Sigmoid colon (tissue), 7 donors: ENCODE measurements at regions of chr19 and their contacts with region 1.

Region 1: DNA sequence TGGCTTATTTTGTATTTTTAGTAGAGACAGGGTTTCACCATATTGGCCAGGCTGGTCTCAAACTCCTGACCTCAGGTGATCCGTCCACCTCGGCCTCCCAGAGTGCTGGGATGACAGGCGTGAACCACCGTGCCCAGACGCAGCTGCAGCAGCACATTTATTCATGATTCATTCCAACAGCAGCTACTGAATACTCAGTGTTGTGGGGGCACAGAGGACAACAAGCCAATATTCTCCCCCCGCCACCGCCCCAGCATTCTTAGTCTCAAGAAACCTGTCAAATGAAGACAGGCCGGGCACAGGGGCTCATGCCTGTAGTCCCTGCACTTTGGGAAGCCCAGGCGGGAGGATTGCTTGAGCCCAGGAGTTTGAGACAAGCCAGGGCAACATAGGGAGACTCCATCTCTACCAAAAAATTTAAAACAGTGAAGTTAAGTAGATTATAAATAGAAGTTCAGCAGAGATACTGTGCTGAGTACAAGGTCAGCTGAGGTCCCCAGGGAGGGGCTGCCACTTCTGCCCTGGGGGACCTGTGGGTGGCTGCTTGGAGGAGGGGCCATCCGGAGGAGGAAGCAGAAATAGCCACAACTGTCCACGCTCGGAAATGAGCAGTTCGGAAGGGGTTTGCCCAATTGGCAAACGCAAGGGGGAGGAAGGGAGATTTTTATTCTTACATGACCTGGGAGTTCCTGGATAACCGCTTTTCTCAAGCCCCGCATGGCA is 4.3 kb downstream of the DOT1L start:
- DNase-seq: peak; percentile 78
- H3K4me3 ChIP-seq: peak overlapping the region in 2 of 4 donors; percentile 7 to 17
- H3K27ac ChIP-seq: peak overlapping the region; percentile 91 to 100 (median 97)
- H3K4me1 ChIP-seq: peaks cover 0 to 87% (median 80%) of the 10 kb centered on the region in 4 donors
- H3K27me3 ChIP-seq: no peaks in the 10 kb centered on the region
- CTCF ChIP-seq: no peak
- EP300 ChIP-seq: peak in 1 of 4 donors; percentile 57
- POLR2A ChIP-seq: no peak

Region 2: DNA sequence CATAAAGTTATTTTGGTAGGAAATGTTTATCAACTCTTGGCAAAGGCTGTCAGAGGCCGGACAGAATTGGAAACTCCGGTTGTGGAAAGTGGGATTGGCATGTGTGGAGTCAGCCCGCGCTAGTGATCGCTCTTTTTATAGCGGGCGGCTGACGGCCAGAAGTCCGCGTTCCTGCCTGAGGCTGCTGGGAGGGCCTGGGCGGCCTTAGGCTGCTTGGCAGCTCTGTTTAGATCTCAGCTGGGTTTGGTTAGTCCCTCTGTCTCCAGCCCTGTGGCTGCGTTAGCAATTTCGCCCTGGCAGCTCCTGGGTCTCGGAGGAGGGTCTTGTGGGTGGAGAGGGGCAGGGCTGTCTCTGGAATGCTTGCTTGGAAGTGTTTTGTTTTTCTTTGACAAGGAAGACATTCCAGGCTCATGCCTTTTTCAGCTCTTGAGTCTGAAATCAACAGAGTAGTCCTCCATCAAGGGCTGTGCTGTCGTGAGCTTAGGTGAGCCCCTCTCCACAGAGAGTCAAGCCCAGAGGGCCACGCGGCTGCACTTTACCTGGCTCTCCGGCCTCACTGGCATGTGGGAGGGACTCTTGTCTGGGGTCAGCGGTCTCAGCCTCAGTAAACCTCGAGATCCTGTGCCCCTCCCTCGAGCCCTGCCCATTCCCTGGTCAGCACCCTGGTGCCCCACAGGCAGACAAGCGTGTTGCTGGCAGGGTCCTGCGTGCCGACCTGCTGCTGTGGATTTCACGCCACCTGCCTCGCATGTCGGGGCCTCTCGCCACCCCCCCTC is 18.2 kb after region 1 on chr19:
- intact Hi-C with region 1: loop called (anchors 1 kb)
- DNase-seq: peak; percentile 96
- H3K4me3 ChIP-seq: peak overlapping the region in 3 of 4 donors; percentile 0 to 21 (median 12)
- H3K27ac ChIP-seq: peak overlapping the region; percentile 80 to 92 (median 84)
- H3K4me1 ChIP-seq: peaks cover 3 to 77% (median 67%) of the 10 kb centered on the region in 4 donors
- H3K27me3 ChIP-seq: no peaks in the 10 kb centered on the region
- CTCF ChIP-seq: no peak
- EP300 ChIP-seq: peak in 2 of 4 donors; percentile 37 to 76
- POLR2A ChIP-seq: no peak